Mammary epithelial cell (primary cell): ENCODE measurements at regions of chr19 and their contacts with region 1.

Region 1: DNA sequence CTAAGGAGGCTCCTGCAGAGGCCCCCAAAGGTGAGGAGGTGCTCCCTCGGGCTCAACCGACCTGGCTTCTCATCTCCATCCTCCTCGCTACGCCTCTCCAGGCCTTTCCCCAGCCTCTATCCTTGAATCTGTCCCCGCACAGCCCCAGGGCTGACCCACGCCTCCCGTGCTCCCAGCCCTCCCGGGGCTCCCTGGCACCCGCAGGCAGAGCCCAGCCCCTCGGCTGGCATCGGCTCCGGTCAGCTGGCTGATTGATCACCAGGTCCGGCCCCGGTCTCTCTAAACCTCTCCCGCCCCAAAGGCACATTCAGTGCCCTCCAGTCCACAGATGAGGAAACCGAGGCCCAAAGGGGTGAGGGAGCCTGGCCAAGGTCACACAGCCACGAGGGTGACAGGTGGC is 2.5 kb downstream of the MYBPC2 start:
- DNase-seq: no peak
- H3K4me3 ChIP-seq: no peak overlapping the region
- H3K27ac ChIP-seq: no peak overlapping the region
- H3K4me1 ChIP-seq: peaks cover 4% of the 10 kb centered on the region
- H3K27me3 ChIP-seq: no peaks in the 10 kb centered on the region
- CTCF ChIP-seq: no peak

Region 2: DNA sequence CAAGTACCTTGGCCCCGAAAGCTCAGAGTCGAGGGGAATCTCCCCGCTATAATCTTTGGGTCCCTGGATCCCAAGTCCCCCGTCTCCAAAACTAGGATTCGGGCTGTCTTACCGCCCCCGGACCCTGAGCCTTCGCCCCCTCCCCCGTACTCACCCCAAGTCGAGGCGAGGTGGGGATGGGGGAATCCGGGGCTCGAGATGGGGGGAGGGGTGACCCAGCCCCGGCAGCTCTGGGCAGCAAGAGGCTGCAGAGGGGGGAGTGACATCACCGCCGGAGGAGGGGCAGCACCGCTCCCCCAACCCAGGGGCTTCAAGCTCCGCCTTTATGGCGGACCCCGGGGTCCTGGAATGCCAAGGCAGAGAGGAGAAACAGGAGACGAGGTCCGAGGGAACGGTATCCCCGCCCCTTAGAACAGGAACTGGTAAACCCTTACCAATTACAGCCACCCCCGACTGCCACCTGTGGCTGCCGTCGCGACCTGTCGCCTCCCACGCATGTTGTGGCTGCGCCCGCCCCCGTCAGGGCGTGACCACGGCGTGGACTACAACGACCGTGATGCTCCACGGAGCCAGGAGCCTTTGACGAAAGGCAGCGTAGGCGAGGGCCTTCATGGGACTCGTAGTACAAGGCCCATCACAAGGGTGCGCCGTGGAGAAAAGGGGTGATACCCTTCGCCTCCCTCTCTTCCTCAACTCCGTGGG is 102.0 kb before region 1 on chr19:
- CTCF ChIA-PET with region 1: no interaction called
- dilution Hi-C with region 1: loop called (anchors 5 kb)
- in situ Hi-C with region 1: no loop called
- intact Hi-C with region 1: no loop called
- DNase-seq: peak; percentile 70
- H3K4me3 ChIP-seq: peak overlapping the region; percentile 3 to 43 (median 40)
- H3K27ac ChIP-seq: no peak overlapping the region
- H3K4me1 ChIP-seq: peaks cover 9% of the 10 kb centered on the region
- H3K27me3 ChIP-seq: peaks cover 20% of the 10 kb centered on the region
- CTCF ChIP-seq: no peak

Region 3: DNA sequence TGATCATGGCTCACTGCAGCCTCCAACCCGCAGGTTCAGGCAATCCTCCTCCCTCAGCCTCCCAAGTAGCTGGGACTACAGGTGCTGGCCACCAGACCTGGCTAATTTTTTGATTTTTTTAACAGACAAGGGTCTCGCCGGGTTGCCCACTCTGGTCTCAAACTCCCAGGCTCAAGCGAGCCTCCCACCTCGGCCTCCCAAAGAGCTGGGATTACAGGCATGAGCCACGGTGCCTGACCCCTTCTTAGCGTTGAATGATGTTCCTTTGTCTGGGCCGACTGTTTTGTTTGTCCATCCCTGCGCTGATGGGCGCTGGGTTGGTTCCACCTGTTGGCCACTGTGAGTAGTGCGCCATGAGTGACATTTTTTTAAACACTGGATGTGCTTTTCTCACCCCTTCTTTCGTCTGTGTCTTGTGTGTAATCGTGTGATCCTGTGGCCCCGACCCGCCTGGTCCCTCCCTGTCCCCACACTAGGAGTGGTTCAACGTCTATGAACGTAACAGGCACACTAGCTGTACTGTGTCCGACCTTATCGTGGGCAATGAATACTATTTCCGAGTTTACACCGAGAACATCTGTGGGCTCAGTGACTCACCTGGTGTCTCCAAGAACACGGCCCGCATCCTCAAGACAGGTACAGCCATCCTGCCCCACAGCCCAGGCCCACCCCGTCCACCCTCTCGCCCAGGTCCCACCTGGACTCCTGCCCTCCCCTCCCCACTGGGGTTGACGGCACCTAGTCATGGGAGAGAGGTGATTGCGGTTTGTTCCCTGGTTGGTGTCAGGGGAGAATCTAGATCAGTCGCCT is 26.1 kb after region 1 on chr19:
- CTCF ChIA-PET with region 1: no interaction called
- dilution Hi-C with region 1: no loop called
- in situ Hi-C with region 1: no loop called
- intact Hi-C with region 1: no loop called
- DNase-seq: peak; percentile 42
- H3K4me3 ChIP-seq: no peak overlapping the region
- H3K27ac ChIP-seq: no peak overlapping the region
- H3K4me1 ChIP-seq: no peaks in the 10 kb centered on the region
- H3K27me3 ChIP-seq: peaks cover 4% of the 10 kb centered on the region
- CTCF ChIP-seq: peak; percentile 86 to 90

Region 4: GRCh38 chr19:50476224-50476942 is 41.2 kb after region 1 on chr19 and contains the starts of genes EMC10 and GARIN5A:
- CTCF ChIA-PET with region 1: no interaction called
- dilution Hi-C with region 1: no loop called
- in situ Hi-C with region 1: no loop called
- intact Hi-C with region 1: no loop called
- DNase-seq: peak; percentile 92
- H3K4me3 ChIP-seq: peak within 1 kb of the TSS; percentile 80 to 96 (median 85)
- H3K27ac ChIP-seq: peak within 1 kb of the TSS; percentile 48
- H3K4me1 ChIP-seq: peaks cover 7% of the 10 kb centered on the region
- H3K27me3 ChIP-seq: no peaks in the 10 kb centered on the region
- CTCF ChIP-seq: no peak
- total RNA-seq, gene EMC10: 53.8 to 77.1 TPM
- total RNA-seq, gene GARIN5A: 1.0 to 2.1 TPM